ENCODE measurements at regions of chr14 and their contacts with region 1.

Region 1: GRCh38 chr14:20613094-20614037 is 22.2 kb upstream of the RNASE12 start:
- DNase-seq: peak; percentile 86 to 88
- H3K4me3 ChIP-seq: peak overlapping the region; percentile 52 to 59
- H3K27ac ChIP-seq: peak overlapping the region; percentile 83 to 91
- H3K4me1 ChIP-seq: peaks cover 0 to 5% of the 10 kb centered on the region in 2 donors
- H3K27me3 ChIP-seq: no peaks in the 10 kb centered on the region
- CTCF ChIP-seq: peak; percentile 76 to 95 (median 80)
- POLR2A ChIP-seq: peak; percentile 28 to 29

Region 2: DNA sequence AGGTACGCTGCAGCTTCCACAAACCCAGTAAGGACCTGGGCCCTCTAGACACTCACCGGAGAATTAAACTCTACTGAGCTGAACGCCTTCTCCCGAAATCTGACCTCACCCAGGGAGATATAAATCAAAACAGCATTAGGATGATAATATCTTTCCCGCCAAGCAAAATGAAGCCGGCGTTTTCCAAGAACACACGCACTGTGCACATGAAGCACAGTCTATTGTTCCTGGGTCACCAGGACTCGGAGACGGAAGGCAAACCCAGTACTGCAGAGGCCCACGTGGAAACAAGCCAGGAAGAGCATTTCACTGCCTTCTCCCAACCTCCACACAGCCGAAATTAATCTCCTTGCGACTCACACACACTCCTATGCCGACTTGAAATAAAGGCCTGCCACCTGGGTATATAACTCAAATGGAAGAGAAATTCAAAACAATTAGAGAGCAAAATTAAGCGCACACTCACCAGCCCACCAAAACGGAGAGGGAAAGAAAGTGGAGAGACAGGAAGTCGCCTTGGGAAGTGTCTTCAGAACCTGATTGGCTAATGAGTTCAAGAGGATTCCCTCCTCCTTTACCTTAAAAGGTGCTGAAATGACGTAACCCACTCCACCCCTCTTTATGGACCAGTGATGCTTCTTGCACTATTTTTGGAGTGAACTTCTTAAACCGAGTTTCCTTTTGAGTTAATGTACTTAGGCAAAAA is 280.4 kb before region 1 on chr14 and contains the start of gene CCNB1IP1:
- intact Hi-C with region 1: loop called (anchors 10 kb)
- DNase-seq: peak; percentile 50 to 87
- H3K4me3 ChIP-seq: peak within 1 kb of the TSS; percentile 52 to 80
- H3K27ac ChIP-seq: peak within 1 kb of the TSS; percentile 89 to 97
- H3K4me1 ChIP-seq: no peaks in the 10 kb centered on the region
- H3K27me3 ChIP-seq: no peaks in the 10 kb centered on the region
- CTCF ChIP-seq: peak in 1 of 4 experiments; percentile 20
- POLR2A ChIP-seq: peak; percentile 46 to 58
- total RNA-seq, gene CCNB1IP1: 45.1 to 118 (median 60.4) TPM

Region 3: GRCh38 chr14:20461274-20462001 is 151.9 kb before region 1 on chr14 and contains the start of gene PIP4P1:
- intact Hi-C with region 1: no loop called
- DNase-seq: peak; percentile 98 to 100
- H3K4me3 ChIP-seq: peak within 1 kb of the TSS; percentile 85 to 96
- H3K27ac ChIP-seq: peak within 1 kb of the TSS; percentile 89 to 97
- H3K4me1 ChIP-seq: peaks cover 7 to 8% of the 10 kb centered on the region in 2 donors
- H3K27me3 ChIP-seq: no peaks in the 10 kb centered on the region
- CTCF ChIP-seq: no peak
- POLR2A ChIP-seq: peak; percentile 57 to 93
- total RNA-seq, gene PIP4P1: 16.4 to 39.1 (median 22.8) TPM

Region 4: GRCh38 chr14:20682435-20683124 is 69.2 kb after region 1 on chr14:
- intact Hi-C with region 1: loop called (anchors 2 kb)
- DNase-seq: peak; percentile 90 to 93
- H3K4me3 ChIP-seq: peak overlapping the region; percentile 79 to 98
- H3K27ac ChIP-seq: peak overlapping the region; percentile 100
- H3K4me1 ChIP-seq: no peaks in the 10 kb centered on the region
- H3K27me3 ChIP-seq: no peaks in the 10 kb centered on the region
- CTCF ChIP-seq: no peak
- POLR2A ChIP-seq: peak; percentile 92 to 98

Measured in uterus (tissue), 4 donors.